GM13977 (cell line): ENCODE measurements at regions of chr5 and their contacts with region 1.

Region 1: GRCh38 chr5:136212252-136212721 is 19.3 kb upstream of the SMIM32 start:
- DNase-seq: peak; percentile 76
- CTCF ChIP-seq: peak; percentile 86

Region 2: GRCh38 chr5:135887351-135887864 is 324.9 kb before region 1 on chr5:
- in situ Hi-C with region 1: loop called (anchors 10 kb)
- DNase-seq: peak; percentile 68
- CTCF ChIP-seq: peak; percentile 89

Region 3: GRCh38 chr5:136145030-136145429 is 67.3 kb before region 1 on chr5:
- in situ Hi-C with region 1: no loop called
- DNase-seq: no peak
- CTCF ChIP-seq: no peak

Region 4: DNA sequence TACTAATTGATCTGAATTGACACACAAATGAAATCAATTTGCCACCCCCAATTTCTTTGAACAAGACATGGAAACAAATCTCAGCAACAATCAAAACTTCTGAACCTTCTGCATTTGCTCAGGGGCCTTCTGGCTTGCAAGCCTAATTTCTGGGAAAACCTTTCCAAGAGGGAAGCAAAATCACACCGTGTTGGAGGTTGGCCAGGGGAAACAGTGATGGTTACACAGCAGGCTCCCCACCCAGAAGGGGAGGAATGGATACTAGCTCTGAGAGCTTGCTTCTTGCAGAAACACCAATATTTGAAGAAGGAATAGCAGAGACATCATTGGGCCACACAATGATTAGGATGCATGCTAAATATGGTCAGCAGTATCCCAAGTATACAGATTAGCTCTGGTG is 641.7 kb after region 1 on chr5:
- in situ Hi-C with region 1: no loop called
- DNase-seq: no peak
- CTCF ChIP-seq: no peak